Activated CD4-positive, alpha-beta memory T cell treated with anti-CD3 and anti-CD28 coated beads, Interleukin-2, amount 10 ng/mL, durations not matched to agents 7 days and 5 days (primary cell): ENCODE measurements at regions of chr1 and their contacts with region 1.

Region 1: DNA sequence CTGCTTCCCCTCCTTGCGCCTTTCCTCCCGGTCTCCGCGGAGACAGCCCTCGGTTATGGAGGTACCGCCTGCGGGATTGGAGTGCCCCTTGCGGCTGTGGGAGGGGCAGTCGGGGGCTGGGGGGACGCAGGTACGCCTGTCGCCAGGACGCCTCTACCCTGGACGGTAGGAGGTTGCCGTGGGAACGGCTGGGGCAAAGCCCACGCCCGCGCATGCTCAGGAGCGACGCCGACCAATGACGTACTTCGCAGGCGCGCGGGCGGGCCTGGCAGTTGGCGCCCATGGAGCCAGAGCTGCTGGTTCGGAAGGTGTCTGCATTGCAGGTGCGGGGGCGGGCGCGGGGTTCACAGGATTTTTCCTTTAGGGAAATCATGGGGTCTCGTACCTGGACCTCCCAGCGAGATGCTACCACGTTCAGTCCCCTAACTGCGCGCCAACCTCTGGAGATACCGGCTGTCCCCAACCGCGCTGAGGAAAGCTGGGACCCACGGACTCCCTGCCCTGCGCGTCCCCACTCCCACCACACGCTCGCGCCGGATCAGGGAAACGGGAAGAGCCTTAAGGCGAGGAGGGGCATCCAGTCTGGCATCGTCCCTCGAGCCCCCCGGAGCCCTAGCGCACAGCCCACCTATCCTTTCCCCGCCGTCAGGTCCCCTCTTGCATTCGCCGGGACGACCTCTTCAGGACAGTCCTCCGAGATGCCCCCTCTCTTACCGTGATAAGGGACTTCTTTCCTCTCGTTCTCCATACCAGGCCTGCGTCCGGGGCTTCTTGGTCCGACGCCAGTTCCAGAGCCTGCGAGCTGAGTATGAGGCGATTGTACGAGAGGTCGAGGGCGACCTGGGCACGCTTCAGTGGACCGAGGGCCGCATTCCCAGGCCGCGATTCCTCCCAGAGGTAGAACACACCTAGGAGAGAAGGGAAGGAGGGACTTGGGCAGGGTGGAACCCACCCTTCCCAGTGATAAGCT is at the start of gene IQCC:
- DNase-seq: peak; percentile 87
- H3K4me3 Mint-ChIP-seq: peak within 1 kb of the TSS; percentile 81
- H3K27ac Mint-ChIP-seq: peak within 1 kb of the TSS; percentile 60
- H3K4me1 Mint-ChIP-seq: peaks cover 45% of the 10 kb centered on the region
- H3K27me3 Mint-ChIP-seq: no peaks in the 10 kb centered on the region
- total RNA-seq, gene IQCC: 3.7 to 3.8 TPM

Region 2: DNA sequence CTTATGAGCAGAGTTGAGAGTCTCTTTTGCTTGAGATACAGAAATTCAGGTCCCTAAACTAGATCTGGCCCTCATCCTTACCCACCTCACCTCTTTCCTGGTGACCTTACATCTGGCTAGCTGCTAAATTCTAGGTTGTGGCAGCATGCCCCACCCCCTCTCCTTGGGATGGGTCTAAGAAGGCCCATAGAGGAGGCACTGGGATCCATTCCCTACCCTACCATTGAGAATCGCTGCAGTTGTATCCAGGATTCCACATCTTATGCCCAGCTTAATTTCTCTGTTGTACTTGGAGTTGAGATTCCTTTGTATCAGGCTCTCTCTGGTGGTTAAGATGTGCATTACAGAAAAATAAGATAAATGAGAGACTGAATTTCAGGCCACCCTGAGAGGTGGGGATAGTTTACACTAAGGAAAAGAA is 142.4 kb before region 1 on chr1:
- CTCF ChIA-PET with region 1: no interaction called
- POLR2A ChIA-PET with region 1: no interaction called
- DNase-seq: no peak
- H3K4me3 Mint-ChIP-seq: no peak overlapping the region
- H3K27ac Mint-ChIP-seq: no peak overlapping the region
- H3K4me1 Mint-ChIP-seq: peaks cover 17% of the 10 kb centered on the region
- H3K27me3 Mint-ChIP-seq: no peaks in the 10 kb centered on the region

Region 3: DNA sequence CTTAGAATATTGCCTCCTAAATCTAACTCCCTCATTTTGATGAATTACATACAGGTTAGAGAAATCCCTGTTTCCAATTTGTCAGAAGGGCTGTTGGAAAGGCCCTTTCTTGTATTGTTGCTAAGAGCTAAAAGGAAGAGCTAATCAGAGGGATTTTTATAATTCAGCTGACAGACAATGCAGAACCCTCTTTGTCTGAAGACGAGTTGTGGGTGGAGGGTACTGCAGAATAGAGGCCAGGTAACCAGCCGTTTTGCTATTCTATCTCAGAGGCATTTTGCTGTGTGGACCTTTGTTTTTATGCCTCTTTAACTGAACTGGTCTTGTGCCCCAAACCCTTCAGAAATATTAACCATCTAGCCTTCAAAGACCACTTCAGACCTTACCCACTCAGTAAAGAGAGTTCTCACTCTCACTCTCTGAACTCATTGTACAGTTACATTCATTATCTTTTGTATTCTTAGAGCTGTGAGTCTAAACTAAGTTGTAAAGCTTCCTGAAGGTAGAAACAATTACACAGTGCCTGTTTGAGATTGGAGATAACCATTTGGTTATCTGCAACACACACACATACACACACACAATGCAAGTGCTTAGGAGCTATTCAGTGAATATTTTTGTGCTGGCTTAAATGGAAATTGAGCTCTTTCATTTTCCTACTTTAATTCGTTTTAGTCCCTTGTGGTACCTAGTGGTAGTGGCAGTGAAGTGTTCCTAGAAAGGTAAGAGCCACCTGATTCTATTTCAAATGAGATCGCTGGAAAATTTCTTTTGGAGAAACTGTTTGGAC is 78.1 kb before region 1 on chr1:
- CTCF ChIA-PET with region 1: no interaction called
- POLR2A ChIA-PET with region 1: no interaction called
- DNase-seq: no peak
- H3K4me3 Mint-ChIP-seq: no peak overlapping the region
- H3K27ac Mint-ChIP-seq: no peak overlapping the region
- H3K4me1 Mint-ChIP-seq: peaks cover 21% of the 10 kb centered on the region
- H3K27me3 Mint-ChIP-seq: no peaks in the 10 kb centered on the region

Region 4: DNA sequence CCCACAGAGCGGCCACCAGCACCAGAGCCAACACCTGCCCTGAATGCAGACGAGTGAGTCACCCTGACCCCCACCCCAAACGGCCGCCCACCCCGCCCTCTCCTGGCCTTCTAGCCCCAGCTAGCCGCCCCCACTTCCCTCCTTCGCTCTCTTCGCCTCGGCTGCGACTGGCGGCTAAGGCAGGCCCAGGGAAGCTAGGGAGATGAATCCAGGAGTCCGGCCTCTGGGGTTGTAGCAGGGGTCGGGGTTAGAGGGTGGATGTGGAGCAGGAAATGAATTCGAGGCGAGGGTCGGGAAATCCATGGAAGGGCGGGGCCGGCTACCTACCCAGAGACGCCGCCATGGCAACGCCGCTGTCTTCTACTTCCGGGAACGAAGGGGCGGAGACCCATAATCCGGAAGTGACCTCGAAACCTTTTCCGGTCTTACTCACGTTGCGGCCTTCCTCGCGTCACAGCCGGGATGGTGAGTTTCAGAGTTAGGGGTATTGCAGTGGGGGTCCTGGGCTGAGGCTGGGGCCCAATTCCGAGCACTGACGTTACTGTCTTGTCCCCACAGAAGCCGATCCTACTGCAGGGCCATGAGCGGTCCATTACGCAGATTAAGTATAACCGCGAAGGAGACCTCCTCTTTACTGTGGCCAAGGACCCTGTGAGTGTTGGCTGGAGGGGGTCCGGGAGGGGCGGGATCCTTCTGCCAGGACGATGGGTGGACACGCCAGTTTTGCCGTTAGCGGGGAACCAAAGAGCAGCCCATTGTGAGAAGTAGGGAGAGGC is 16.5 kb after region 1 on chr1 and contains the starts of genes EIF3I and TMEM234:
- CTCF ChIA-PET with region 1: no interaction called
- POLR2A ChIA-PET with region 1: interaction called, 10 read pairs
- DNase-seq: peak; percentile 93
- H3K4me3 Mint-ChIP-seq: peak within 1 kb of the TSS; percentile 97
- H3K27ac Mint-ChIP-seq: peak within 1 kb of the TSS; percentile 94
- H3K4me1 Mint-ChIP-seq: peaks cover 46% of the 10 kb centered on the region
- H3K27me3 Mint-ChIP-seq: no peaks in the 10 kb centered on the region
- total RNA-seq, gene EIF3I: 161 to 172 TPM
- total RNA-seq, gene TMEM234: 15.3 to 16.4 TPM